ENCODE measurements at regions of chr6 and their contacts with region 1.

Region 1: DNA sequence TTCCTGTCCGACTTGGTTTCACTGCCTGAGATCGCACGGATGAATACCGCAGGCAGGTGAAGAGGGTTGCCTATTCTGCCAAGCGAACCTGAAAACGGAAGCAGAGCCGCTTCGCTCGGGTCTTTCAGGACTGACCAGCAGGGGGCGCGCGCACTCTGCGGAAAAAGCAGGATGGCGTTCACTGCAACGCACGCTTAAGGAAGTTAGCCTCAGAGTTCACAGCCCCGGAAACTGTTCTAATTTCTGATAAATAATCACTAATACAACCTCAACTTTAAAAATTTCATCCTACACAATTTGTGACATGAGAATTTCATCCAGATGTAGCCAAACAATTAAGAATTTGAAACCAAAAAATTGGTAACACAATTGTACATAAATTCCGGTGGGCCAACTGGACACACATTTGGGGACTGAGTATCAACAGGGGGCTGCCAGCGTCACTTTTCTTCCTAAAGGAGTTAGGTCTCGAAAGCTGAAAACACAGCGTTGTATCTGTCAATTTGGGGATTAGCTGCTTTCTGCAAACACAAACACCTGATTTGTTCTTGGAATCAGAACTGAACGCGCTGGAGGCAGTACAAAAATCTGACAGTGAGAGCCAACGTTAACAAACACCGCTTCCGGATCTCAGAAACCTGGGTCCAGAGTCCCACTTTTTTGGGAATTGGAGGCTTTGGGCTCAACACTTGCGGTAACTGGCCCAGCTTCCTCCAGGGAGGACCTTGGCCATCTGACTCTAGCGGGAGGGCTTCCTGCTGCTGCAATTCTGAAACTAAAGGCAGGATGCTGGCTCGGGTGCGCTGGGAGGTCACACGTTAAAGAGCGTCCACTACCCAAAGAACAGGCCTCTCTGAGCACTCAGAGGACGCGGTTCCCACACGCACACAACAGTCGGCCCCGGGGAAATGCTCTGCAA is 8.8 kb downstream of the PXDC1 start:
- DNase-seq: peak; percentile 87
- H3K4me3 Mint-ChIP-seq: peak overlapping the region; percentile 55
- H3K27ac Mint-ChIP-seq: peak overlapping the region; percentile 85
- H3K4me1 Mint-ChIP-seq: peaks cover 36% of the 10 kb centered on the region
- H3K27me3 Mint-ChIP-seq: no peaks in the 10 kb centered on the region
- CTCF ChIP-seq: peak; percentile 76

Region 2: GRCh38 chr6:3473773-3474172 is 268.9 kb before region 1 on chr6:
- CTCF ChIA-PET with region 1: no interaction called
- intact Hi-C with region 1: no loop called
- DNase-seq: no peak
- H3K4me3 Mint-ChIP-seq: no peak overlapping the region
- H3K27ac Mint-ChIP-seq: no peak overlapping the region
- H3K4me1 Mint-ChIP-seq: no peaks in the 10 kb centered on the region
- H3K27me3 Mint-ChIP-seq: peaks cover 35% of the 10 kb centered on the region
- CTCF ChIP-seq: no peak

Region 3: DNA sequence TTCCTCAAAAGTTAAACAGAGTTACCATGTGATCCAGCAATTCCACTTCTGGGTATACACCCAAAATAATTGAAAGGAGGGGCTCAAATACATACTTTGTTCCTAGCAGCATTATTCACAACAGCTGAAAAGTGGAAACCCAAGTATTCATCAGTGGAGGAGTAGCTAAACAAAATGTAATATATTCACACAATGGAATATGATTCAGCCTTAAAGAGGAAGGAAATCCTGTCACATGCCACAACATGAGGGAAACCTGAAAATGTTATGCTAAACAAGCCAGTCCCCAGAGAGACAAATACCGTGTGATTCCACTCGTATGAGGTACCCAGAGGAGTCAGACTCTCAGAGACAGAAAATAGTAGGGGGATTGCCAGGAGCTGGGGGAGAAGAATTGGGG is 35.7 kb before region 1 on chr6:
- CTCF ChIA-PET with region 1: no interaction called
- intact Hi-C with region 1: no loop called
- DNase-seq: no peak
- H3K4me3 Mint-ChIP-seq: no peak overlapping the region
- H3K27ac Mint-ChIP-seq: no peak overlapping the region
- H3K4me1 Mint-ChIP-seq: no peaks in the 10 kb centered on the region
- H3K27me3 Mint-ChIP-seq: peaks cover 20% of the 10 kb centered on the region
- CTCF ChIP-seq: no peak

Region 4: DNA sequence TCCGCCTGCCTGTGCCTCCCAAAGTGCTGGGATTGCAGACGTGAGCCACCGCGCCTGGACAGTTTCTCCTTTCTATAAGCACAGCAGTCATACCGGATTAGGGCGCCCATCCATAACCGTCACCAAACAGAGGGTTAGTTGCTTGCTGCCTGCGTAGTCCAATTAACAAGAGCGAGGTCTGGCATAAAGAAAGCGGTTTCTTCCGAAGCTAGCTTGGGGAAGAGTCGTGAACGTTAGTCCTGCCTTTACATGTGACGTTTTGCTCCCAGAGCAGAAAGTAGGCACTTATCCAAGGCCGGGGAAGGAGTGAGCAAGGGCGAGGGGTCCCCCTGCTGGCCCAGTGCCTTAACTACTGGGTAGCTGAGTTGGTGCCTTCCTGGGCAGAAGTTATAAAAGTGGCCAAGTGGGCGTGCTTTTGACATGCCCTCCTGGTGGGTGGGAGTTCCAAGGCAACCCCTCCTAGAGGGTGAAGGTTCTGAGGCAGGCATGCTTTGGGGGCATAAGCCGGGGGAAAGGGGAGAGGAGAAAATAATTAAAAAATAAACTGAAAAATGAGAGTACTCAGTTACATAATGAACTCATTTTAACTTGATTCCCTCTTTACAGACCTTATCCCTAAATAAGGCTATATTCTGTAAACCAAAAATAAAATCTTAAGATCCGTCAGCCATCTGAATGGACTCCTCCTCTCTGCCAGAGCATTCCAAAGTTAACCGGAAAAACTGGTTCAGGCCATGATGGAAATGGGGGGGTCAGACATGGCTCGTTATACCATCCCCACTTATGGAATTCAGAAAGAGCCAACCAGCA is 248.2 kb after region 1 on chr6:
- CTCF ChIA-PET with region 1: interaction called, 3 read pairs
- intact Hi-C with region 1: loop called (anchors 2 kb)
- DNase-seq: peak; percentile 85
- H3K4me3 Mint-ChIP-seq: peak overlapping the region; percentile 60
- H3K27ac Mint-ChIP-seq: peak overlapping the region; percentile 54
- H3K4me1 Mint-ChIP-seq: peaks cover 59% of the 10 kb centered on the region
- H3K27me3 Mint-ChIP-seq: no peaks in the 10 kb centered on the region
- CTCF ChIP-seq: peak; percentile 74

Region 5: GRCh38 chr6:4008324-4009047 is 265.8 kb after region 1 on chr6:
- CTCF ChIA-PET with region 1: no interaction called
- intact Hi-C with region 1: loop called (anchors 2 kb)
- DNase-seq: peak; percentile 16
- H3K4me3 Mint-ChIP-seq: no peak overlapping the region
- H3K27ac Mint-ChIP-seq: peak overlapping the region; percentile 63
- H3K4me1 Mint-ChIP-seq: peaks cover 18% of the 10 kb centered on the region
- H3K27me3 Mint-ChIP-seq: no peaks in the 10 kb centered on the region
- CTCF ChIP-seq: peak; percentile 27

Region 6: GRCh38 chr6:4155848-4156466 is 413.3 kb after region 1 on chr6:
- CTCF ChIA-PET with region 1: no interaction called
- intact Hi-C with region 1: loop called (anchors 10 kb)
- DNase-seq: peak; percentile 75
- H3K4me3 Mint-ChIP-seq: no peak overlapping the region
- H3K27ac Mint-ChIP-seq: no peak overlapping the region
- H3K4me1 Mint-ChIP-seq: no peaks in the 10 kb centered on the region
- H3K27me3 Mint-ChIP-seq: peaks cover 26% of the 10 kb centered on the region
- CTCF ChIP-seq: no peak

Region 7: DNA sequence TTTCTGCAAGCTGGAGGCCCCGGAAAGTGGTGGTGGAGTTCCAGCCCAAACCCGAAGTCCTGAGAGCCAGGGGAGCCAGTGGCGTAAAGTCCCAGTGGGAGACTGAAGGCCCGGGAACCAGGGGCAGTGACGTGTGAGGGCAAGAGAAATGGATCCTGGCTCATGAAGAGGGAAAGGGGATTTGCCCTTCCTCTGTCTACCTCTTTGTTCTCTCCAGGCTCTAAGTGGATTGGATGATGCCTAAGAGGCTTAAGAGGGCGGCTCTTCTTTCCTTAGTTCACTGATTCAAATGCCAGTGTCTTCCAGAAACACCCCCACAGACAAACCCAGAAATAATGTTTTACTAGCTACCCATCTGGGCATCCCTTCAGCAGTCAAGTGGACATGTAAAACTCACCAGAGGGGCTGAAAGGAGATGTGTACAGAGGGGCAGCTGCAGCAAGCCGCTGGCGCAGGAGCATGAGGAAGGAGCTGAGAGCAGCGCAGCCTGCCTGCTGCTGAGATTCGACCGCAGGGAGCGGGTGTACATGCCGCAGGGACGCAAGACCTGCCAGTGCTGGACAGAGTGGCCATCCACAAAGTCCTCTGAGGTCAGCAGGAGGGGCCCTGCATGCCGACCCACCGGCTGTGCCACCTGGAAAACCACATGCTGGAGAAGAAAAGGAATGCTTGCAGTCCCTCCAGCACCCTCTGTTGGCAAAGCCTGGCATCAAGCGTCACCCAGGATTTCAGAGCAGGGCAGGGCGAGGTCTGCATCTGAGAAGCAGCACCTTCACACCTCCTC is 1063.1 kb after region 1 on chr6:
- CTCF ChIA-PET with region 1: no interaction called
- intact Hi-C with region 1: no loop called
- DNase-seq: peak; percentile 62
- H3K4me3 Mint-ChIP-seq: no peak overlapping the region
- H3K27ac Mint-ChIP-seq: no peak overlapping the region
- H3K4me1 Mint-ChIP-seq: peaks cover 10% of the 10 kb centered on the region
- H3K27me3 Mint-ChIP-seq: no peaks in the 10 kb centered on the region
- CTCF ChIP-seq: peak; percentile 55

Measured in Calu3 (cell line).